ENCODE measurements at regions of chr16 and their contacts with region 1.

Region 1: DNA sequence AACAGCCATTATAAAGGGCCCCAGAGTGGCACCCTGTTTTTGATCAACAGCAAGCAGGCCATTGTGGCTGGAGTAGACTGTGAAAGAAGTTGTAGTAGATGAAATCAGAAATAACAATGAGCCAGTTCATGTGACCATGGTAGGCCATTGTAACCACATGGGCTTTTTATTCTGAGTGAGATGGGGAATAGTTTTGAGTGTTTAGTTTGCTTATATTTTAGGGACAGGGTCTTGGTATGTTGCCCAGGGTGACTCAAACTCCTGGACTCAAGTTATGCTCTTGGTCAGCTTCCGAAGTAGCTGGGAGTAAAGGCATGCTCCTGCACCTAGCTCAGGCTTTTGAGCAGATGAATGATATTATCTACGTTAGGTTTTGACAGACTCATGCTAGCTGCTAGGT is 12.0 kb downstream of the CBFB start:
- DNase-seq: no peak
- H3K4me3 ChIP-seq: no peak overlapping the region
- H3K27ac ChIP-seq: no peak overlapping the region
- H3K4me1 ChIP-seq: peaks cover 0 to 1% (median 0%) of the 10 kb centered on the region in 4 experiments
- H3K27me3 ChIP-seq: no peaks in the 10 kb centered on the region

Region 2: DNA sequence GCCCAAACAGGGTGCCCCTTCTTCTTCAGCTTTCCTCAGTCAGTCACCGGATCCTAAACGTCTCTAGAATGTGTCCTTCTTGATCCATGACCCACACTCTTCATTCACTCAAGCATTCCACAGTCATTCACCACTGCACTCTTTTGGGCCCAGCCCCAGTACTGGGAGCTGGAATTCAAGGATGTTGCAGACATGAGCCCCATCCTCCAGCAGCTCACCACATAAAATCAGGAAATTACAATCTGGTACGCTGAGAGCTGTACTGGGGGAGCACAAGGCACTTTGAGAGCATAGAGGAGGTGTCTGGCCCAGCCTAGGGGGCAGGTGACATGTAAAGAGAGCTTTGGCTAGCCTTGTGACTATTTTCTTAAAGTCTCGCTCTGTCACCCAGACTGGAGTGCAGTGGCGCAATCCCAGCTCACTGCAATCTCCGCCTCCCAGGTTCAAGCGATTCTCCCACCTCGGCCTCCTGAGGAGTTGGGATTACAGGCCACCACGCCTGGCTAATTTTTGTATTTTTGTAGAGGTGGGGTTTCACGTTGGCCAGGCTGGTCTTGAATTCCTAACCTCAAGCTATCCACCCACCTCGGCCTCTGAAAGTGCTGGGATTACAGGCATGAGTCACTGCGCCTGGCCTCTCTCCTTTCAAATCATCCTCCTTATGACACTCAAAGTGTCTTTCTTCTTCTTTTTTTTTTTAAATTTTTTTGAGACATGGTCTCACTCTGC is 33.8 kb before region 1 on chr16:
- CTCF ChIA-PET with region 1: no interaction called
- POLR2A ChIA-PET with region 1: no interaction called
- DNase-seq: no peak
- H3K4me3 ChIP-seq: no peak overlapping the region
- H3K27ac ChIP-seq: no peak overlapping the region
- H3K4me1 ChIP-seq: no peaks in the 10 kb centered on the region
- H3K27me3 ChIP-seq: peaks cover 0 to 4% (median 0%) of the 10 kb centered on the region in 5 experiments

Region 3: GRCh38 chr16:67028555-67029248 is 12.2 kb before region 1 on chr16 and contains the start of gene CBFB:
- CTCF ChIA-PET with region 1: interaction called, 15 read pairs
- POLR2A ChIA-PET with region 1: interaction called, 4 read pairs
- DNase-seq: peak; percentile 94 to 96 (median 96)
- H3K4me3 ChIP-seq: peak within 1 kb of the TSS; percentile 77 to 98 (median 88)
- H3K27ac ChIP-seq: peak within 1 kb of the TSS; percentile 90 to 96
- H3K4me1 ChIP-seq: peaks cover 16 to 33% (median 29%) of the 10 kb centered on the region in 4 experiments
- H3K27me3 ChIP-seq: no peaks in the 10 kb centered on the region

Region 4: DNA sequence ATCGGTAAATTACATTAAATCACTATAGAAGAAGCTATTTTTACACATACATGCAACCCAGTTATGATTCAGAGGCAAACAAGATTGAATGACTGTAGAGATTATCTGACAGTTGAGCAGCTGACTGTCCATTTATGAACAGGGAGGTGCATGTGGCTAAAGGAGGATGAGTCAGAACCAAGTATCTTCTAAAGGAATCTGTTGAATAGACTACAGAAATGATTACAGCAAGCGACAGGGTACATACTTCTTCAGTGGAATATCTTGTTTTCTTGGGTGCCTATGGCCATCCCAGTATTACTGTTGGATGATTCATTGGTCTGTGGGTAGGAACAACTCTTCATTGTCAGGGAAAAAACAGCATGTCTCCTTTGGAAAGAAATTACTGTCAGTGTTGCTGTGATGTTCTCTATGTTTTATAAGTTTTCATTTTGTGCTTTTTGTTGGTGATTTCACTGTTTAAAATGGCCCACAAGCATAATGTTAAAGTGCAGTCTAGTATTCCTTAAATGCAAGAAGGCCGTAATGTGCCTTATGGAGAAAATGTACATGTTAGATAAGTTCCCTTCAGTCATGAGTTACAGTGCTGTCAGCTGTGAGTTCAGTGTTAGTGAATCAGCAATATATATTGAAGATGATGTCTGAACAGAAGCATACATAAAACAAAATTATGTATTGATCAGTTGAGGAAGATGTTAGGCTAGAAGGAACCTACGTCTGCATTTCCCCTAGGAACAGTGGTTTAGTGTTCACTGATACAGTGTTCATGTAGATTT is 15.0 kb after region 1 on chr16:
- CTCF ChIA-PET with region 1: interaction called, 14 read pairs
- POLR2A ChIA-PET with region 1: interaction called, 3 read pairs
- DNase-seq: peak in 2 of 3 donors; percentile 38 to 56
- H3K4me3 ChIP-seq: no peak overlapping the region
- H3K27ac ChIP-seq: peak overlapping the region in 1 of 2 experiments; percentile 6
- H3K4me1 ChIP-seq: peaks cover 5 to 37% (median 18%) of the 10 kb centered on the region in 4 experiments
- H3K27me3 ChIP-seq: no peaks in the 10 kb centered on the region